Thyroid gland (tissue), 4 donors: ENCODE measurements at regions of chrX and their contacts with region 1.

Region 1: GRCh38 chrX:70998411-70999027 is 67.6 kb upstream of the SLC7A3 start:
- DNase-seq: peak; percentile 35 to 44
- H3K4me3 ChIP-seq: no peak overlapping the region
- H3K27ac ChIP-seq: no peak overlapping the region
- H3K4me1 ChIP-seq: no peaks in the 10 kb centered on the region
- H3K27me3 ChIP-seq: no peaks in the 10 kb centered on the region
- CTCF ChIP-seq: peak in 3 of 6 experiments; percentile 37 to 55 (median 52)
- POLR2A ChIP-seq: no peak

Region 2: GRCh38 chrX:71128915-71129765 is 130.6 kb after region 1 on chrX:
- intact Hi-C with region 1: no loop called
- DNase-seq: peak; percentile 52 to 54
- H3K4me3 ChIP-seq: no peak overlapping the region
- H3K27ac ChIP-seq: no peak overlapping the region
- H3K4me1 ChIP-seq: no peaks in the 10 kb centered on the region
- H3K27me3 ChIP-seq: no peaks in the 10 kb centered on the region
- CTCF ChIP-seq: peak in 5 of 6 experiments; percentile 26 to 59 (median 45)
- POLR2A ChIP-seq: no peak

Region 3: DNA sequence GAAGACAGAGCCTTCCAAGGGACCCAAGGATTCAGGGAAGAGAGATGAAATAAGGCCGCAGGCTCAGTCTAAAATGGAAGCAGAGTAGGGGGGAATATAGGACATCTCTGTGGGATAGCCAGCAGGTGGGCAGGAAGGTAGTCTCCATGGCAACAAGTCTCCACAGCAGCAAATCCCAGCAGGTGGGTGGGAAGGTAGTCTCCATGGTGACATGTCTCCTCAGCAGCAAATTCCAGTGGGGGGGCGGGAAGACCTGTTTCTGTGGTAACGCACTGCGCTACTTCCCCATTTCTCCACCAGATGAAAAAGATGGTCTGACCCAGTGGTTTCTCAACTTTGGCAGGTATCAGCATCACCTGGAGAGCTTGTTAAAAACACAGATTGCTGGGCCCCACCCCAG is 164.5 kb after region 1 on chrX:
- intact Hi-C with region 1: loop called (anchors 10 kb)
- DNase-seq: no peak
- H3K4me3 ChIP-seq: no peak overlapping the region
- H3K27ac ChIP-seq: no peak overlapping the region
- H3K4me1 ChIP-seq: no peaks in the 10 kb centered on the region
- H3K27me3 ChIP-seq: no peaks in the 10 kb centered on the region
- CTCF ChIP-seq: no peak
- POLR2A ChIP-seq: no peak